Posterior vena cava (tissue), 2 donors: ENCODE measurements at regions of chr9 and their contacts with region 1.

Region 1: GRCh38 chr9:684054-684890 is 157.2 kb upstream of the DMRT1 start:
- DNase-seq: no peak

Region 2: DNA sequence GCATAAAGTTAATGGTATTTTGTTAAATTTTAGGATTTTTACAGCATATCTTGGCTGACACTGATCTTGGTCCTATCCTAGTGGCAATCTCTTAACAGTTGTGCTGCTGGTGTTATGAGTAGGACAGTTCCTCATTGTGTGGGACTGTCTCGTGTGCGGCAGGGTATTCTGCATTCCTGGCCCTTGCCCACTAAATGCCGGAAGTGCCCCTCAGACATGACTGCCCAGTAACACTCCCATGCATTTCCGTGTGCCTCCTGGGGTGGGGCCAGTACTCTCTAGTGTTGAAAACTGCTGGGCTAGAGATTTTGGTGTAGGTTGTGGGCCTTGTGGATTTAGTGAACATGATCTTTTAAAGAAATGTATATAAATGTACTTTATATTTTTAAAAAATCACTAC is 69.8 kb before region 1 on chr9:
- intact Hi-C with region 1: no loop called
- DNase-seq: no peak

Region 3: DNA sequence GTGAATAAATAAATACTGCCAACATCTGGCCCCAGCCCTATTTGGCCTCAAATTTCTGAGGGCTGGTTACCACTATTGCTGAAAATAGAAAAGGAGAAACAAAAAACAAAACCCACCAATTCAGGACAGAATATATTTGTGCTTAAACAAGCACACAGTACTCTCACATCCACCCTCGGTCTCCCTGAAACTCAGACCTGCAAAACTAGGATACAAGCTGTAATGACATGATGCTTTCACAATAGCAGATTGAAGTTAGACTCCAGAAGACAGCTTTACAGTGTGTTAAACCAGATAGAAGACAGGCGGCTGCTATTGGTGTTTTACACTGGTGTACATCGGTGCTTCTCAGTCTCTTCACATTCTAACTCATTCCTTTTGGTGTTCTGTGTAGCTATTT is 57.7 kb before region 1 on chr9:
- intact Hi-C with region 1: loop called (anchors 5 to 10 kb)
- DNase-seq: no peak

Region 4: GRCh38 chr9:738209-738915 is 54.1 kb after region 1 on chr9:
- intact Hi-C with region 1: loop called in 1 of 2 experiments (anchors 5 kb)
- DNase-seq: peak; percentile 88